Caco-2 (cell line): ENCODE measurements at regions of chr1 and their contacts with region 1.

Region 1: GRCh38 chr1:244952940-244953339 is 88.6 kb upstream of the HNRNPU start:
- DNase-seq: peak; percentile 78 to 84
- H3K4me3 ChIP-seq: no peak overlapping the region
- H3K4me3 Mint-ChIP-seq: peak overlapping the region; percentile 34
- H3K27ac Mint-ChIP-seq: peak overlapping the region; percentile 55
- H3K4me1 ChIP-seq: peaks cover 21% of the 10 kb centered on the region
- H3K4me1 Mint-ChIP-seq: peaks cover 11% of the 10 kb centered on the region
- H3K27me3 ChIP-seq: no peaks in the 10 kb centered on the region
- H3K27me3 Mint-ChIP-seq: no peaks in the 10 kb centered on the region
- CTCF ChIP-seq: no peak

Region 2: DNA sequence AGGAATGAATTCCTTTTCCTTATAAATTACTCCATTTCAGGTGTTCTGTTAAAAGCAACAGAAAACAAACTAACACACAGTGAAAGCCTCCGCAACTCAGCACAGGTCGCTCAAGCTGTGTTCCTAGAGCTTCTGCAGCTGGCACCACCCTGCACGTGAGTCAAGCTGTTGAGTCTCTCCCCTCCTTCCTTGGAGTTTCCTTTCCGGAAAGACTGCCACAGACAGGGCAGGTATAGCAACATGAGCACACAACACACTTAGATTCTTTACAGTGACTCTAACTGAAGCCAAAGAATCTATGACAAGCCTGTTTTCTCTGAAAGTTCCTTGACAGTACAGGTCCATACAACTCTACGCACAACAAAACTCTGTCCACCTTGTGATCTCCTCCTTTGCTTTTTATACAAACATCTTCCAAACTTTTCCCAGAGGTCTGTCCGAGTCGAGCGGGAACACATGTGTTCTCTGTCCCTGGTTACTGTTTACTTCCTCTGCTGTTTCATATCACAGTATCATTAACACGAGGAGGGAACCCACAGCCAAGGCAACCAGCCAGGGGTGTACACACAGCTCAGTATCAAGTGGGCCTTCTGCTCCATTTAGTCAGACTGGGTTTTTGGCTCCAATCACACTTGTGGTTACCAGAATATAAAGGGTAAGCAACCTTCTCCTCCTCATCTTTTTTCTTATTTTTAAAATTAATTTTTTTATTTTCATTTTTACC is 338.7 kb before region 1 on chr1:
- CTCF ChIA-PET with region 1: no interaction called
- POLR2A ChIA-PET with region 1: no interaction called
- intact Hi-C with region 1: no loop called
- DNase-seq: no peak
- H3K4me3 ChIP-seq: no peak overlapping the region
- H3K4me3 Mint-ChIP-seq: no peak overlapping the region
- H3K27ac Mint-ChIP-seq: no peak overlapping the region
- H3K4me1 ChIP-seq: peaks cover 10% of the 10 kb centered on the region; the same call in 1 of the 2 replicates
- H3K4me1 Mint-ChIP-seq: peaks cover 18% of the 10 kb centered on the region
- H3K27me3 ChIP-seq: no peaks in the 10 kb centered on the region
- H3K27me3 Mint-ChIP-seq: no peaks in the 10 kb centered on the region
- CTCF ChIP-seq: no peak

Region 3: GRCh38 chr1:244901400-244902015 is 51.4 kb before region 1 on chr1:
- CTCF ChIA-PET with region 1: no interaction called
- POLR2A ChIA-PET with region 1: no interaction called
- intact Hi-C with region 1: no loop called
- DNase-seq: peak in 1 of 2 experiments; percentile 39
- H3K4me3 ChIP-seq: no peak overlapping the region
- H3K4me3 Mint-ChIP-seq: no peak overlapping the region
- H3K27ac Mint-ChIP-seq: no peak overlapping the region
- H3K4me1 ChIP-seq: peaks cover under 1% of the 10 kb centered on the region
- H3K4me1 Mint-ChIP-seq: peaks cover 19% of the 10 kb centered on the region
- H3K27me3 ChIP-seq: no peaks in the 10 kb centered on the region
- H3K27me3 Mint-ChIP-seq: no peaks in the 10 kb centered on the region
- CTCF ChIP-seq: no peak

Region 4: GRCh38 chr1:244970661-244971551 is 18.0 kb after region 1 on chr1:
- CTCF ChIA-PET with region 1: interaction called, 3 read pairs
- POLR2A ChIA-PET with region 1: interaction called, 7 read pairs
- intact Hi-C with region 1: loop called (anchors 1 kb)
- DNase-seq: peak; percentile 97
- H3K4me3 ChIP-seq: peak overlapping the region; percentile 82
- H3K4me3 Mint-ChIP-seq: peak overlapping the region; percentile 91
- H3K27ac Mint-ChIP-seq: peak overlapping the region; percentile 99
- H3K4me1 ChIP-seq: peaks cover 16% of the 10 kb centered on the region
- H3K4me1 Mint-ChIP-seq: peaks cover 20% of the 10 kb centered on the region
- H3K27me3 ChIP-seq: no peaks in the 10 kb centered on the region
- H3K27me3 Mint-ChIP-seq: no peaks in the 10 kb centered on the region
- CTCF ChIP-seq: peak; percentile 54 to 79

Region 5: GRCh38 chr1:245263529-245264095 is 310.7 kb after region 1 on chr1:
- CTCF ChIA-PET with region 1: no interaction called
- POLR2A ChIA-PET with region 1: no interaction called
- intact Hi-C with region 1: no loop called
- DNase-seq: no peak
- H3K4me3 ChIP-seq: no peak overlapping the region
- H3K4me3 Mint-ChIP-seq: no peak overlapping the region
- H3K27ac Mint-ChIP-seq: no peak overlapping the region
- H3K4me1 ChIP-seq: peaks cover 20% of the 10 kb centered on the region
- H3K4me1 Mint-ChIP-seq: peaks cover 13% of the 10 kb centered on the region
- H3K27me3 ChIP-seq: no peaks in the 10 kb centered on the region
- H3K27me3 Mint-ChIP-seq: no peaks in the 10 kb centered on the region
- CTCF ChIP-seq: no peak

Region 6: DNA sequence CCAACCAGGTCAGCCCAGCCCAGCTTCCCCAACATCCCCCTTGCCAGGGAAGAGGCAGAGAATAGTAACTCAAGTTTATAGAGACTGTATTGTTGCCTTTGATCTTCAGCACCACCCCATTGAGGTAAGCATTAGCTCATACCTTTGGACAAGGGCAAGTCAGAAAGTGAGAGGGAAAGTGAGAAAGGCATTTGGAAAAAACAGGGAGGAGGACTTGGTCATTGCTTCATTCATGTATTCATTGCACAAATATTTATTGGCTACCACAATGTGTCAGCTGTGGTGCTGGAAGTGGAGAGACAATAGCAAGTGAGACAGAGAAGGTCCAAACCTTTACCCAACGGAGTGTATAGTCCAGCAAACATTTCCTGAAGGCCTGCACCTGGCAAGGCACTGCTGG is 763.0 kb after region 1 on chr1:
- CTCF ChIA-PET with region 1: no interaction called
- POLR2A ChIA-PET with region 1: no interaction called
- intact Hi-C with region 1: no loop called
- DNase-seq: peak in 1 of 2 experiments; percentile 16
- H3K4me3 ChIP-seq: no peak overlapping the region
- H3K4me3 Mint-ChIP-seq: no peak overlapping the region
- H3K27ac Mint-ChIP-seq: no peak overlapping the region
- H3K4me1 ChIP-seq: no peaks in the 10 kb centered on the region
- H3K4me1 Mint-ChIP-seq: no peaks in the 10 kb centered on the region
- H3K27me3 ChIP-seq: no peaks in the 10 kb centered on the region
- H3K27me3 Mint-ChIP-seq: no peaks in the 10 kb centered on the region
- CTCF ChIP-seq: no peak